CD4-positive, alpha-beta memory T cell (primary cell): ENCODE measurements at regions of chr3 and their contacts with region 1.

Region 1: GRCh38 chr3:120348981-120349818 is at the start of gene LRRC58:
- DNase-seq: peak; percentile 86 to 93 (median 93)
- H3K4me3 ChIP-seq: peak within 1 kb of the TSS; percentile 67 to 91
- H3K4me3 Mint-ChIP-seq: peak within 1 kb of the TSS; percentile 88 to 95 (median 93)
- H3K27ac ChIP-seq: peak within 1 kb of the TSS; percentile 77
- H3K27ac Mint-ChIP-seq: peak within 1 kb of the TSS; percentile 87 to 96 (median 92)
- H3K4me1 ChIP-seq: peaks cover 46% of the 10 kb centered on the region
- H3K4me1 Mint-ChIP-seq: peaks cover 36 to 50% (median 43%) of the 10 kb centered on the region in 4 donors
- H3K27me3 ChIP-seq: no peaks in the 10 kb centered on the region
- H3K27me3 Mint-ChIP-seq: peaks cover 2% of the 10 kb centered on the region in 2 donors
- total RNA-seq, gene LRRC58: 23.0 to 23.6 TPM

Region 2: GRCh38 chr3:120062474-120062873 is 286.7 kb before region 1 on chr3:
- CTCF ChIA-PET with region 1: no interaction called
- POLR2A ChIA-PET with region 1: no interaction called
- intact Hi-C with region 1: no loop called
- DNase-seq: no peak
- H3K4me3 ChIP-seq: no peak overlapping the region
- H3K4me3 Mint-ChIP-seq: peak overlapping the region in 1 of 8 donors; percentile 8
- H3K27ac ChIP-seq: no peak overlapping the region
- H3K27ac Mint-ChIP-seq: no peak overlapping the region
- H3K4me1 ChIP-seq: peaks cover 41% of the 10 kb centered on the region
- H3K4me1 Mint-ChIP-seq: peaks cover 39 to 66% (median 42%) of the 10 kb centered on the region in 4 donors
- H3K27me3 ChIP-seq: no peaks in the 10 kb centered on the region
- H3K27me3 Mint-ChIP-seq: no peaks in the 10 kb centered on the region

Region 3: GRCh38 chr3:120324192-120324591 is 25.0 kb before region 1 on chr3:
- CTCF ChIA-PET with region 1: interaction called, 3 read pairs
- POLR2A ChIA-PET with region 1: interaction called, 6 read pairs
- intact Hi-C with region 1: loop called (anchors 2 kb)
- DNase-seq: no peak
- H3K4me3 ChIP-seq: no peak overlapping the region
- H3K4me3 Mint-ChIP-seq: no peak overlapping the region
- H3K27ac ChIP-seq: no peak overlapping the region
- H3K27ac Mint-ChIP-seq: no peak overlapping the region
- H3K4me1 ChIP-seq: no peaks in the 10 kb centered on the region
- H3K4me1 Mint-ChIP-seq: peaks cover 0 to 2% (median 0%) of the 10 kb centered on the region in 4 donors
- H3K27me3 ChIP-seq: no peaks in the 10 kb centered on the region
- H3K27me3 Mint-ChIP-seq: no peaks in the 10 kb centered on the region

Region 4: DNA sequence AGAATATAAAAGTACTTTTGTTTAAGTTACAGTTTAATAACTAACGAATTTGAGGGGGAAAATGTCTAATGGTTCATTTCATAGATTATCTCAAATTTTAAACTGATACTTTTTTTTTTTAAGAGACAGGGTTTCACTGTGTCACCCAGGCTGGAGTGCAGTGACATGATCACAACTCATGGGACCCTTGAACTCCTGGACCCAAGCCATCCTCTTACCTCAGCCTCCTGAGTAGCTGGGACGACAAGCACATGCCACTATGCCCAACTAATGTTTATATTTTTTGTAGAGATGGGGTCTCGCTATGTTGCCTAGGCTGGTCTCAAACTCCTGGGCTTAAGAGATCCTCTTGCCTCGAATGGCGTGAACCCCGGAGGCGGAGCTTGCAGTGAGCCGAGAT is 16.6 kb before region 1 on chr3:
- CTCF ChIA-PET with region 1: interaction called, 4 read pairs
- POLR2A ChIA-PET with region 1: interaction called, 12 read pairs
- intact Hi-C with region 1: loop called (anchors 2 kb)
- DNase-seq: no peak
- H3K4me3 ChIP-seq: no peak overlapping the region
- H3K4me3 Mint-ChIP-seq: no peak overlapping the region
- H3K27ac ChIP-seq: no peak overlapping the region
- H3K27ac Mint-ChIP-seq: no peak overlapping the region
- H3K4me1 ChIP-seq: no peaks in the 10 kb centered on the region
- H3K4me1 Mint-ChIP-seq: peaks cover 6 to 12% (median 10%) of the 10 kb centered on the region in 4 donors
- H3K27me3 ChIP-seq: no peaks in the 10 kb centered on the region
- H3K27me3 Mint-ChIP-seq: no peaks in the 10 kb centered on the region

Region 5: GRCh38 chr3:120596116-120596852 is 247.1 kb after region 1 on chr3 and contains the start of gene NDUFB4:
- CTCF ChIA-PET with region 1: interaction called, 3 read pairs
- POLR2A ChIA-PET with region 1: interaction called, 14 read pairs
- intact Hi-C with region 1: loop called (anchors 2 kb)
- DNase-seq: peak; percentile 89 to 96 (median 96)
- H3K4me3 ChIP-seq: peak within 1 kb of the TSS; percentile 97 to 99
- H3K4me3 Mint-ChIP-seq: peak within 1 kb of the TSS; percentile 91 to 98 (median 95)
- H3K27ac ChIP-seq: peak within 1 kb of the TSS; percentile 98
- H3K27ac Mint-ChIP-seq: peak within 1 kb of the TSS in 6 of 7 donors; percentile 96 to 99 (median 98)
- H3K4me1 ChIP-seq: peaks cover 30% of the 10 kb centered on the region
- H3K4me1 Mint-ChIP-seq: peaks cover 6 to 8% (median 7%) of the 10 kb centered on the region in 4 donors
- H3K27me3 ChIP-seq: no peaks in the 10 kb centered on the region
- H3K27me3 Mint-ChIP-seq: no peaks in the 10 kb centered on the region
- total RNA-seq, gene NDUFB4: 82.1 to 82.8 TPM

Region 6: GRCh38 chr3:120608506-120608905 is 259.3 kb after region 1 on chr3:
- CTCF ChIA-PET with region 1: no interaction called
- POLR2A ChIA-PET with region 1: no interaction called
- intact Hi-C with region 1: no loop called
- DNase-seq: no peak
- H3K4me3 ChIP-seq: no peak overlapping the region
- H3K4me3 Mint-ChIP-seq: no peak overlapping the region
- H3K27ac ChIP-seq: no peak overlapping the region
- H3K27ac Mint-ChIP-seq: no peak overlapping the region
- H3K4me1 ChIP-seq: no peaks in the 10 kb centered on the region
- H3K4me1 Mint-ChIP-seq: no peaks in the 10 kb centered on the region
- H3K27me3 ChIP-seq: no peaks in the 10 kb centered on the region
- H3K27me3 Mint-ChIP-seq: peaks cover 2 to 5% of the 10 kb centered on the region in 2 donors